B cell (primary cell): ENCODE measurements at regions of chr4 and their contacts with region 1.

Region 1: GRCh38 chr4:184263910-184264732 is 46.4 kb upstream of the ENPP6 start:
- DNase-seq: peak; percentile 93
- ATAC-seq: peak; percentile 42
- H3K4me3 ChIP-seq: no peak overlapping the region
- H3K4me3 Mint-ChIP-seq: peak overlapping the region; percentile 42
- H3K27ac ChIP-seq: peak overlapping the region in 1 of 2 donors; percentile 24
- H3K27ac Mint-ChIP-seq: peak overlapping the region; percentile 51
- H3K4me1 ChIP-seq: peaks cover 32 to 37% of the 10 kb centered on the region in 2 donors
- H3K4me1 Mint-ChIP-seq: peaks cover 41% of the 10 kb centered on the region
- H3K27me3 ChIP-seq: no peaks in the 10 kb centered on the region
- H3K27me3 Mint-ChIP-seq: no peaks in the 10 kb centered on the region
- CTCF ChIP-seq: peak; percentile 86

Region 2: DNA sequence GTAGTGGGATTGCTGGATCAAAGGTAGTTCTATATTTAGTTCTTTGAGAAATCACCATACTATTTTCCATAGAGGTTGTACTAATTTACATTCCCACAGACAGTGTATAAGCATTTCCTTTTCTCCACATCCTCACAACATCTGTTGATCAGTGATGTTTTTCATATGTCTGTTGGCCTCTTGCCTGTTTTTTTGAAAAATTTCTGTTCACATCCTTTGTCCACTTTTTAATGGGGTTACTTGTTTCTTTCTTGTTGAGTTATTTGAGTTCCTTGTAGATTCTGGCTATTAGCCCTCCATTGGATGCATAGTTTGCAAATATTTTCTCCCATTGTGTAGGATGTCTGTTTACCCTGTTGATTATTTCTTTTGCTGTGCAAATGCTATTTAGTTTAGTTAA is 286.4 kb before region 1 on chr4:
- CTCF ChIA-PET with region 1: no interaction called
- POLR2A ChIA-PET with region 1: no interaction called
- intact Hi-C with region 1: no loop called
- DNase-seq: no peak
- ATAC-seq: no peak
- H3K4me3 ChIP-seq: no peak overlapping the region
- H3K4me3 Mint-ChIP-seq: no peak overlapping the region
- H3K27ac ChIP-seq: no peak overlapping the region
- H3K27ac Mint-ChIP-seq: no peak overlapping the region
- H3K4me1 ChIP-seq: no peaks in the 10 kb centered on the region
- H3K4me1 Mint-ChIP-seq: no peaks in the 10 kb centered on the region
- H3K27me3 ChIP-seq: no peaks in the 10 kb centered on the region
- H3K27me3 Mint-ChIP-seq: peaks cover 6% of the 10 kb centered on the region
- CTCF ChIP-seq: no peak

Region 3: DNA sequence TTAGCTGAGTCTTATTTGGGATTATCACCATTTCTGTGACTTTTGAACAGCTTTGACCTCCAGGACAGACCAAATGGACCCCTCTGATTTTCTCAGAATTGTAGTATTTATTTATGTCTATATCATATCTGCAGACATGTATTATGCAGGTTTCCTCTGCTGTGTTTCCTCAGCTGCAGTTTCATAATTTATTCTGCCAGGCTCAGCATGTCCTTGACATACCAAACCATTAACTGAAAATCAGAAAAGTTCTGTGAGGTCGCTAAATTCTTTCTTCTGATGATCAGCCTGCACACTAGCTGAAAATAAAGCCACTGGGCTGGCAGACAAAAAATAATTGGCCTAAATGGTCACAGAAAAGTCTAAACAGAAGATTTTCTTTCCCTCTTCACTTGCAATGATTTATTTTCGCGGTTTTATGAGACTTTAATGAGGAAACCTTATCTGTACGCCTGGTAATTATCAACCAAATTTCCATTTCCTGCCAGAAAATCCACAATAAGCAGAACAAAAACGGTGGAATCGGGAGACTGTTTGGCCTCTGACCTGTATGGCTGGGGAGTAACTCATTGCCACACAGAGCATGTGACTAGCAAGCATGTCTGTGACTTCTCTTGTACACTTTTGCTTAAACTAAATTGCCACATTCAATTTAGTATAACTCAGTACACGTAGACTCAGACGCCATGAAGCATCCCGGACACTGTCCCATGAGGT is 197.4 kb before region 1 on chr4:
- CTCF ChIA-PET with region 1: no interaction called
- POLR2A ChIA-PET with region 1: no interaction called
- intact Hi-C with region 1: no loop called
- DNase-seq: no peak
- ATAC-seq: no peak
- H3K4me3 ChIP-seq: no peak overlapping the region
- H3K4me3 Mint-ChIP-seq: no peak overlapping the region
- H3K27ac ChIP-seq: no peak overlapping the region
- H3K27ac Mint-ChIP-seq: no peak overlapping the region
- H3K4me1 ChIP-seq: no peaks in the 10 kb centered on the region
- H3K4me1 Mint-ChIP-seq: no peaks in the 10 kb centered on the region
- H3K27me3 ChIP-seq: no peaks in the 10 kb centered on the region
- H3K27me3 Mint-ChIP-seq: peaks cover 12% of the 10 kb centered on the region
- CTCF ChIP-seq: no peak

Region 4: GRCh38 chr4:184310171-184310567 is 46.0 kb after region 1 on chr4:
- CTCF ChIA-PET with region 1: interaction called, 22 read pairs
- POLR2A ChIA-PET with region 1: no interaction called
- intact Hi-C with region 1: loop called (anchors 1 kb)
- DNase-seq: peak; percentile 71
- ATAC-seq: peak; percentile 21
- H3K4me3 ChIP-seq: no peak overlapping the region
- H3K4me3 Mint-ChIP-seq: peak overlapping the region; percentile 29
- H3K27ac ChIP-seq: no peak overlapping the region
- H3K27ac Mint-ChIP-seq: peak overlapping the region; percentile 56
- H3K4me1 ChIP-seq: peaks cover 46 to 48% of the 10 kb centered on the region in 2 donors
- H3K4me1 Mint-ChIP-seq: peaks cover 60% of the 10 kb centered on the region
- H3K27me3 ChIP-seq: no peaks in the 10 kb centered on the region
- H3K27me3 Mint-ChIP-seq: no peaks in the 10 kb centered on the region
- CTCF ChIP-seq: peak; percentile 58

Region 5: DNA sequence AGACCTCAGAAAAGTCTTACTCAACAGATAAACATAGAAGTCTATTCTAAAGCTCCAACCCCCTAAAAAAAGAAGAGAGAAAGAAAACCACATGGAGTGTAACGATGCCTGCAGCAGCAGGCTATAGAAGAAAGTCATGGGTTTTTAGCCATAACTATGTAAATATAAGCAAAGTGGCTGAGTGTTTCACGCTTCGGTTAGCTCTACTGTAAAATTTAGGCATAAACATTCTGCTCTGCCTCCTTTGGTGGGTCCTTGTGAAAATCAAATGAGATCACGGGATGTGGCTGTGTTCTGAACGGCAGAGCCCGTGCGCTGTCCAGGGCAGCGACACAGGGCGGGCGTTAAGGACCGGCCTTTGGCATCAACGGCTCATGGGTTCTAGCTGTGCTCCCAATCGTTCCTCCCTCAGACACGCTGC is 131.9 kb after region 1 on chr4:
- CTCF ChIA-PET with region 1: interaction called, 16 read pairs
- POLR2A ChIA-PET with region 1: interaction called, 5 read pairs
- intact Hi-C with region 1: loop called (anchors 1 kb)
- DNase-seq: peak; percentile 87
- ATAC-seq: peak; percentile 90
- H3K4me3 ChIP-seq: peak overlapping the region in 4 of 5 experiments; percentile 10 to 44 (median 15)
- H3K4me3 Mint-ChIP-seq: peak overlapping the region; percentile 89
- H3K27ac ChIP-seq: peak overlapping the region; percentile 9 to 79
- H3K27ac Mint-ChIP-seq: peak overlapping the region; percentile 95
- H3K4me1 ChIP-seq: peaks cover 27 to 35% of the 10 kb centered on the region in 2 donors
- H3K4me1 Mint-ChIP-seq: peaks cover 44% of the 10 kb centered on the region
- H3K27me3 ChIP-seq: no peaks in the 10 kb centered on the region
- H3K27me3 Mint-ChIP-seq: no peaks in the 10 kb centered on the region
- CTCF ChIP-seq: peak; percentile 15

Region 6: DNA sequence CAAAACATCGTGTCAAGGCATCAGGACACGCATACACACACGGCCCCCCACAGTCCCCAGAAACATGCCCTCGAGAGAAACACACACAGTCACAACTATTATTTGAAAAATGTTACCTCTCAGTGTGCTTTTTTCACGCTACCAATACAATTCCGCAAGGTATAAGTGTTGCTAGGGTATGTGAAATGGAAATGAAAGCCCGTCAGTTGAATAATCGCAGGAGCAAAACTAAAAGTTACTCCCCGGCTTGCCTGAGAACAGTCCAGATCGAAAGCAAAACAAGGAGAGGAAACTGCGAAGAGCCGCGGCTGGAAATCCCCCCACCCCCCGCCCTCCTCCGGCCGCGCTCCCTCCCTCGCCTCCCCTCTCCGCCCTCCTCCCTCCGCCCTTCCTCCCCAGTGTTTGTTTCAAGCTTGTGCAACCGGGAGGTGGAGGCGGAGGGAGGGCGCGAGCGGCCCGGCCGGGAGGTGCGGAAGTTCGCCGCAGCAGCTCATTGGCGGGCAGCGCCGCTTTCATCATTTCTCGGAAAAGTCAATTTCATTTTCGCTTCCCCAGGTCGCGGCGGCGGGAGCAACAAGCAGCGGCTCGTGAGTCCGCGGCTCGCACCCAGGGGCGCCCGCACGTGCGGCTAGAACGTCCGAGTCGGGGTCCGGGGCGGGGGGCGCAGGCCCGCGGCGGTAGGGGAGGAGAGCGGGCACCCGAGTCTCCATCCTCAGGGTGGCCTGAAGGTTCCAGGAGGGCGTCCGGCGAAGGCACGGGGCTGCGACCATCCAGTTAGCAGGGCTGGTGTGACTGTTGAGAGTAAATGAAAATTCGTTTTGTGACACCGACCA is 210.4 kb after region 1 on chr4 and contains the start of gene IRF2:
- CTCF ChIA-PET with region 1: interaction called, 19 read pairs
- POLR2A ChIA-PET with region 1: interaction called, 8 read pairs
- intact Hi-C with region 1: loop called (anchors 1 kb)
- DNase-seq: peak; percentile 98
- ATAC-seq: peak; percentile 82
- H3K4me3 ChIP-seq: peak within 1 kb of the TSS; percentile 92 to 100 (median 97)
- H3K4me3 Mint-ChIP-seq: peak within 1 kb of the TSS; percentile 96
- H3K27ac ChIP-seq: peak within 1 kb of the TSS; percentile 91 to 96
- H3K27ac Mint-ChIP-seq: peak within 1 kb of the TSS; percentile 95
- H3K4me1 ChIP-seq: peaks cover 53 to 54% of the 10 kb centered on the region in 2 donors
- H3K4me1 Mint-ChIP-seq: peaks cover 66% of the 10 kb centered on the region
- H3K27me3 ChIP-seq: no peaks in the 10 kb centered on the region
- H3K27me3 Mint-ChIP-seq: no peaks in the 10 kb centered on the region
- CTCF ChIP-seq: no peak
- total RNA-seq, gene IRF2: 68.2 and 68.4 TPM in 2 replicates

Region 7: DNA sequence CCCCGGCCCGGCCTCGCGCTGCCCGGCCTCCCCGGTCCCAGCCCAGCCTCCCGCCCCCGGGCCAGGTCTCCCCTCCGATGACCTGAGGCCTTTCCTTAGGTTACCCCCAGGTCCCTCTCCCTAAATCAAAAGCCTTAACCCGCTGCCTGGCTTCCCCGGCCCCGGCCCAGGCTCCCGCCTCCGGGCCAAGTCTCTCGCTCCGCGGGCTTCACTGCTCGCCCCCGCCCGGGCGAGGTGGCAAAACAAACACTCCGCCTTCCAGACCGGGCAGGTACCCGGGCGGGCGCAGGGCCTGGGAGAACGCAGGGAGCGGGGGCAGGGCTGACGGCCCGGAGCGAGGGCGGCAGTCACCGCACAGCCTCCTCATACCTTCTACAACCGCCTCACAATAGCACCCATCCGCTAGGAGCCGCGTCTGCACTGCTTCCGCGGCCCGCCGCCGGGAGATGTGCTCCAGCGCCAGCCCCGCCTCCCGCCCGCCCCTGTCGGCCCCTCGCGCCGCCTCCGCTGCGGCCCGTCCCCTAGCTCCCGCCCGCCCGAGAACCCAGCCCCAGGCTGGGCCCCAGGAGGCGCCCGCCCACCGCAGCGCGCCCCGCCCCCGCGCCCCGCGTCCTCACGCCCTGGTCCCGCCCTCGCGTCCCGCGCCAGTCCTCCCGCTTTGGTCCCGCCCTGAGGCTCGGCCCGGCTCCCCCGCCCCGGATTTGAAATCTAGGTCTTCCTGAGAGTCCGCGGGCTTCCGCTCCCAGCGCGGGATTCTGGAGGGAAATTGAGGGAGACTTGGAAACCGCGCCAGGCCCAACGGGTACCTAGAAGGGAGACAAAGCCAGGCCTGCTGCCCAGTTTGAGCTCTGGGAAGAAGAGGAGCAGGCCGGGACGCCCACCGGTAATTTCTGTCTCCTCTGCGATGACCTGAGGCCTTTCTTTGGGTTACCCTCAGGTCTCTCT is 385.2 kb after region 1 on chr4 and contains the starts of genes CASP3 and PRIMPOL:
- CTCF ChIA-PET with region 1: interaction called, 10 read pairs
- POLR2A ChIA-PET with region 1: interaction called, 4 read pairs
- intact Hi-C with region 1: loop called (anchors 1 kb)
- DNase-seq: peak; percentile 97
- ATAC-seq: peak; percentile 95
- H3K4me3 ChIP-seq: peak within 1 kb of the TSS; percentile 75 to 95 (median 89)
- H3K4me3 Mint-ChIP-seq: peak within 1 kb of the TSS; percentile 94
- H3K27ac ChIP-seq: peak within 1 kb of the TSS; percentile 71 to 95
- H3K27ac Mint-ChIP-seq: peak within 1 kb of the TSS; percentile 94
- H3K4me1 ChIP-seq: peaks cover 24 to 29% of the 10 kb centered on the region in 2 donors
- H3K4me1 Mint-ChIP-seq: peaks cover 44% of the 10 kb centered on the region
- H3K27me3 ChIP-seq: no peaks in the 10 kb centered on the region
- H3K27me3 Mint-ChIP-seq: no peaks in the 10 kb centered on the region
- CTCF ChIP-seq: peak; percentile 18
- total RNA-seq, gene CASP3: 15.8 and 16.8 TPM in 2 replicates
- total RNA-seq, gene PRIMPOL: 15.4 and 21.5 TPM in 2 replicates

Region 8: GRCh38 chr4:184825896-184826690 is 562.0 kb after region 1 on chr4 and contains the start of gene ACSL1:
- CTCF ChIA-PET with region 1: no interaction called
- POLR2A ChIA-PET with region 1: no interaction called
- intact Hi-C with region 1: loop called (anchors 5 kb)
- DNase-seq: peak; percentile 89
- ATAC-seq: peak; percentile 80
- H3K4me3 ChIP-seq: peak within 1 kb of the TSS; percentile 58 to 94 (median 76)
- H3K4me3 Mint-ChIP-seq: peak within 1 kb of the TSS; percentile 98
- H3K27ac ChIP-seq: peak within 1 kb of the TSS; percentile 48 to 93
- H3K27ac Mint-ChIP-seq: peak within 1 kb of the TSS; percentile 96
- H3K4me1 ChIP-seq: peaks cover 23 to 26% of the 10 kb centered on the region in 2 donors
- H3K4me1 Mint-ChIP-seq: peaks cover 46% of the 10 kb centered on the region
- H3K27me3 ChIP-seq: no peaks in the 10 kb centered on the region
- H3K27me3 Mint-ChIP-seq: no peaks in the 10 kb centered on the region
- CTCF ChIP-seq: no peak
- total RNA-seq, gene ACSL1: 31.8 and 32.2 TPM in 2 replicates

Region 9: DNA sequence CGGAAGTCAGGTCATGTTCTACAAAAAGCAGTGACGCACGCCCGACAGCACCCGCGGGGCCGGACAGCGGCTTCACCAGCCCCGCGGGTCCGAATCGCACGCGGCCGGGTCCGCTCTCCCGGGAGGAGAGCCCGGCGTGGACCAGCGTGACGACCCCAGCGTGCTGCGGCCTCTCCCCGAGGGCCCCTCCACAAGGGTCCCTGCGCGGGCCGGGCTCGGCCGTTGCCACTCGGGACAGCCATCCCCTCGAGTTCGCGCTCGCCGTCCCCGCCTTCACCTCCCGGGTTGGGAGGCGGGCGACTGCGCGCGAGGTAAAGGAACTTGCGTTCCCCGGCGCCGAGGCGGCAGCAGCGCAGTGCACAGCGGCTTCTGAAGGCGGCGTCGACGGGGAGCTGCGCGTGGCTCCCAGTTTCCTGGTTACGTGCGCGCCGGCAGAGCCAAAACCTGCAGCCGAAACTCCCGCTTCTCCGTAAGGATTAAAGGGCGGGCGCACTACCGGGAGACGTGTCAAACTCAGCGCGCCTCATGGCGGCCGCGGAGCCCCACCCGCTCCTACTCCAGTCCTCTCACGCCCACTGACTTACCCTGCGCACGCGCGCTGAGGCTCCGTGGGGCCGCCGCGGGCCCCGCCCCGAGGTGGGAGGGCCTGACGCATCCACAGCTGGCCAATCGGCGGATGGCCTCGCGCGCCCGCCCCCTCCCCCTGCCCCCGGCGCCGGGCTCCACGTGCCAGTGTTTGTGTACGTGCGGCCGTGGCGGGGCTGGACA is 1132.0 kb after region 1 on chr4:
- CTCF ChIA-PET with region 1: no interaction called
- POLR2A ChIA-PET with region 1: no interaction called
- intact Hi-C with region 1: loop called (anchors 10 kb)
- DNase-seq: peak; percentile 97
- ATAC-seq: peak; percentile 87
- H3K4me3 ChIP-seq: peak overlapping the region; percentile 79 to 98 (median 89)
- H3K4me3 Mint-ChIP-seq: peak overlapping the region; percentile 92
- H3K27ac ChIP-seq: peak overlapping the region; percentile 97 to 99
- H3K27ac Mint-ChIP-seq: peak overlapping the region; percentile 94
- H3K4me1 ChIP-seq: peaks cover 26% of the 10 kb centered on the region in 2 donors
- H3K4me1 Mint-ChIP-seq: peaks cover 54% of the 10 kb centered on the region
- H3K27me3 ChIP-seq: no peaks in the 10 kb centered on the region
- H3K27me3 Mint-ChIP-seq: no peaks in the 10 kb centered on the region
- CTCF ChIP-seq: no peak